B cell (primary cell): ENCODE measurements at regions of chr3 and their contacts with region 1.

Region 1: DNA sequence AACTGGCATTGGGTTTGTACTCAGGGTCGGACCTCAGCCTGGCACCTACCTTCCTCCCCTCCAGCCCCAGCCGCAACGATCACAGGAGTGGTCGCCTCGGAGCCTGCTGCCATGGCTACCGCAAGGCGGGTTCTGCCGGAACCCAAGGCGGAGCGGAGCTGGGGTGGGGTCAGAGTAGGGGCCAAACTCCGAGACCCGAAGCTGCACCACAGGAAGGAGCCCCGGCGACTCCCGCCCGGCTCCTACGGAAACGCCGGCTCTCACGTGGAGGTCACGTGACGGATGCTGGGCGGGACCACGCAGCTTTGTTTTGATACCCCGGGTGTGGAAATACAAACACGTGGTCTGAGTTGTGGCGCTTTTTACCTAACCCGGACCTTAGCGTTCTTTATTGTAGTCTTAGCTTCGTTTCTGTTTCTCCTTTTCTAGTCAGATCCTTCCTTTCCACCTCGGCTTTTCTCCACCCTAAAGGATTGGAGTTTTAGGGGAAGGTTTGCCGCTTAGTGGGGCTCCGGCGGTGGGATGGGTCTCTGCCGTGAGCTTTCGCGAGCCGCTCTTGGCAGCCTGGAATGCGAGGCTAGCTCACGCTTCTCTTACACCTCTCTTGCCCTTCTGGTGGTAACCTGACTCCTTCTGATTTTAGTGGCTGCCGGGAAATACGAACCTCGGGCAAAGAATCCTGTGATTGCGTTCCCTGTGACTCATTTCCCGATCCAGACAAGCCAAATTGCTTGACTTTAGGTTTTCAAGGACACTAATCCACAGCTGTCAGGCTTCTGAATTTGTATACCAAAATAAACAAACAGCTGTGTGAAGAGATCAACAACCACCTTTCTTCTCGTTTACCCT is at the start of gene HSPBAP1:
- DNase-seq: peak; percentile 96
- ATAC-seq: peak; percentile 57
- H3K4me3 ChIP-seq: peak within 1 kb of the TSS; percentile 58 to 96 (median 83)
- H3K4me3 Mint-ChIP-seq: peak within 1 kb of the TSS; percentile 86
- H3K27ac ChIP-seq: peak within 1 kb of the TSS; percentile 98 to 99
- H3K27ac Mint-ChIP-seq: no peak within 1 kb of the TSS
- H3K4me1 ChIP-seq: peaks cover 23 to 26% of the 10 kb centered on the region in 2 donors
- H3K4me1 Mint-ChIP-seq: peaks cover 27% of the 10 kb centered on the region
- H3K27me3 ChIP-seq: no peaks in the 10 kb centered on the region
- H3K27me3 Mint-ChIP-seq: no peaks in the 10 kb centered on the region
- CTCF ChIP-seq: no peak
- total RNA-seq, gene HSPBAP1: 49.2 and 49.6 TPM in 2 replicates

Region 2: DNA sequence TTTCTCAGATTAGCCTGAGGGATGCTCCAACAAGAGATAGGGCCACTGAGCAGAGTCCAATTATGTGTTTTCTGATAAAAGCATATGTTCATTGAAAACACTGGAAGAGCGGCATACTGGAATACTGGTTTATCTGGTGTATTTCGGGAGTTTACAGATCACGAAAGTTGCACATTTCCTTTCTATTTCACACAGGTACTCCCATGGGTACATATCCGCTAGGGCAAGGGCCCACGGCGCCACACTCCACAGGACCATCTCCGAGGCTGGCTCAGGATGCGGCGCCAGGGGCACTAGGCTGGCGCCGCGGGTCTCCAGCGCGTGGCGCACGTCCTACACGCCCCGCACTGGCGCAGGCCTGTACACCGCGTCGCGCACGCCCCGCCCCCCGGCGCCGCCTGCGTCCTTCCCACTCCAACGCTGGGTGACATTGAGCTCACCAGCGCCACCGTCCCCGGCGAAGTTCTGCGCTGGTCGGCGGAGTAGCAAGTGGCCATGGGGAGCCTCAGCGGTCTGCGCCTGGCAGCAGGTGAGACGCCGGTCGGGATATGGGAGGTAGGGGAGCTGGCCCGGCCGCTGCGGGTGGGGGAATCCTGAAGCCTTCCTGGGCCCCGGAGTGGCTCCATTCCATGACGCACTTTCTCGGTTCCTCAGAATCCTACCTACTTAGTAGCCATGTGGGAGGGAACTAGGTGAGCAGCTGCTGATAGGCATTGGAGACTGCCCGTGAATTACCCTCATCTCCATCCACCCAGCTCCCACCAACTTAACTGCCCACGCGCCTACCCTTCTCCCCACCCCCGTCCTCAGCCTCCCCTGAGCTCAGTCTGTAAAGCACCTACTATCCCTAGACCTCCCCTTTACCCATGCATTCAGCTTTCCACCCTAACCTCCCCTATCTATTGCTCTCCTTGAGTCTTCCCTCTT is 409.8 kb before region 1 on chr3 and contains the start of gene FAM162A:
- CTCF ChIA-PET with region 1: no interaction called
- POLR2A ChIA-PET with region 1: interaction called, 8 read pairs
- intact Hi-C with region 1: loop called (anchors 1 kb)
- DNase-seq: peak; percentile 96
- ATAC-seq: peak; percentile 96
- H3K4me3 ChIP-seq: peak within 1 kb of the TSS; percentile 75 to 95 (median 86)
- H3K4me3 Mint-ChIP-seq: peak within 1 kb of the TSS; percentile 93
- H3K27ac ChIP-seq: peak within 1 kb of the TSS; percentile 82 to 83
- H3K27ac Mint-ChIP-seq: peak within 1 kb of the TSS; percentile 94
- H3K4me1 ChIP-seq: peaks cover 11 to 15% of the 10 kb centered on the region in 2 donors
- H3K4me1 Mint-ChIP-seq: peaks cover 37% of the 10 kb centered on the region
- H3K27me3 ChIP-seq: no peaks in the 10 kb centered on the region
- H3K27me3 Mint-ChIP-seq: no peaks in the 10 kb centered on the region
- CTCF ChIP-seq: peak; percentile 68
- total RNA-seq, gene FAM162A: 13.9 and 17.5 TPM in 2 replicates

Region 3: GRCh38 chr3:122427857-122428471 is 365.8 kb before region 1 on chr3:
- CTCF ChIA-PET with region 1: no interaction called
- POLR2A ChIA-PET with region 1: interaction called, 10 read pairs
- intact Hi-C with region 1: no loop called
- DNase-seq: no peak
- ATAC-seq: no peak
- H3K4me3 ChIP-seq: no peak overlapping the region
- H3K4me3 Mint-ChIP-seq: no peak overlapping the region
- H3K27ac ChIP-seq: peak overlapping the region in 1 of 2 donors; percentile 37
- H3K27ac Mint-ChIP-seq: peak overlapping the region; percentile 5
- H3K4me1 ChIP-seq: no peaks in the 10 kb centered on the region
- H3K4me1 Mint-ChIP-seq: no peaks in the 10 kb centered on the region
- H3K27me3 ChIP-seq: no peaks in the 10 kb centered on the region
- H3K27me3 Mint-ChIP-seq: no peaks in the 10 kb centered on the region
- CTCF ChIP-seq: no peak

Region 4: DNA sequence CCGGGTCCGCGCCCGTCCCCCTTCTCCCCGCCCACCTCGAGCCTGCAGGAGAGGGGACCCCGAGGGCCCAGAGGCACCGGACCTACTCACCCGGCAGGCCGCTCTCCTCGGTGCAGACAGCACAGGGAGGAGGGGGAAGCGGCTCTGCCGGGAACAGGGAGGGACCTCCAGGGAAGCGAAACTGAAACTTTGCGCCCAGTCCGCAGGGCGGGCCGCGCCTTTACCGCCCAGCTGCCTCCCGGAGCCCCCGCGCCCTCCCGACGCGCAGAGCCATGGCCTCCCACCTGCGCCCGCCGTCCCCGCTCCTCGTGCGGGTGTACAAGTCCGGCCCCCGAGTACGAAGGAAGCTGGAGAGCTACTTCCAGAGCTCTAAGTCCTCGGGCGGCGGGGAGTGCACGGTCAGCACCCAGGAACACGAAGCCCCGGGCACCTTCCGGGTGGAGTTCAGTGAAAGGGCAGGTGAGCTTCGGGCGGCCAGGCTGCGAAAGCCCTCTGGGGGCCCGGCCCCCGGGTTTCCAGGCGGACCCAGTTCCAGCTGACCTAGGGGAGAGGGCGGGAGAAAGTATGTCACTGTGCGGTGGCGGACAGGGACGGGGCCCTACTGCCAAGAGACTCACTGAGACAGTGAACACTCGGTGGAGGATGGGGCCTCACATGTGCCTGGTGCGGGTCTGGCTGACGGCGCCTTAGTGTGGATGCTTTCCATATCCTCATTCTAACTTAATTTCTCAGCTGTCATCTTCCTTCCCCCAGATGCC is 229.5 kb before region 1 on chr3 and contains the starts of genes DTX3L and PARP9:
- CTCF ChIA-PET with region 1: interaction called, 6 read pairs
- POLR2A ChIA-PET with region 1: interaction called, 3 read pairs
- intact Hi-C with region 1: loop called (anchors 2 kb)
- DNase-seq: peak; percentile 84
- ATAC-seq: peak; percentile 84
- H3K4me3 ChIP-seq: peak within 1 kb of the TSS; percentile 63 to 95 (median 89)
- H3K4me3 Mint-ChIP-seq: peak within 1 kb of the TSS; percentile 92
- H3K27ac ChIP-seq: peak within 1 kb of the TSS; percentile 91 to 92
- H3K27ac Mint-ChIP-seq: peak within 1 kb of the TSS; percentile 95
- H3K4me1 ChIP-seq: peaks cover 59 to 69% of the 10 kb centered on the region in 2 donors
- H3K4me1 Mint-ChIP-seq: peaks cover 77% of the 10 kb centered on the region
- H3K27me3 ChIP-seq: no peaks in the 10 kb centered on the region
- H3K27me3 Mint-ChIP-seq: no peaks in the 10 kb centered on the region
- CTCF ChIP-seq: no peak
- total RNA-seq, gene DTX3L: 41.1 and 44.0 TPM in 2 replicates
- total RNA-seq, gene PARP9: 29.8 and 31.2 TPM in 2 replicates

Region 5: GRCh38 chr3:122697952-122698620 is 95.7 kb before region 1 on chr3:
- CTCF ChIA-PET with region 1: interaction called, 6 read pairs
- POLR2A ChIA-PET with region 1: interaction called, 6 read pairs
- intact Hi-C with region 1: loop called (anchors 1 kb)
- DNase-seq: peak; percentile 89
- ATAC-seq: peak; percentile 96
- H3K4me3 ChIP-seq: peak overlapping the region in 1 of 5 experiments; percentile 48
- H3K4me3 Mint-ChIP-seq: peak overlapping the region; percentile 59
- H3K27ac ChIP-seq: peak overlapping the region; percentile 84 to 95
- H3K27ac Mint-ChIP-seq: peak overlapping the region; percentile 88
- H3K4me1 ChIP-seq: peaks cover 78 to 83% of the 10 kb centered on the region in 2 donors
- H3K4me1 Mint-ChIP-seq: peaks cover 85% of the 10 kb centered on the region
- H3K27me3 ChIP-seq: no peaks in the 10 kb centered on the region
- H3K27me3 Mint-ChIP-seq: no peaks in the 10 kb centered on the region
- CTCF ChIP-seq: no peak

Region 6: GRCh38 chr3:123584988-123585937 is 791.5 kb after region 1 on chr3 and contains the start of gene HACD2:
- CTCF ChIA-PET with region 1: no interaction called
- POLR2A ChIA-PET with region 1: no interaction called
- intact Hi-C with region 1: loop called (anchors 10 kb)
- DNase-seq: peak; percentile 96
- ATAC-seq: peak; percentile 94
- H3K4me3 ChIP-seq: peak within 1 kb of the TSS; percentile 78 to 99 (median 86)
- H3K4me3 Mint-ChIP-seq: no peak within 1 kb of the TSS
- H3K27ac ChIP-seq: peak within 1 kb of the TSS; percentile 79 to 87
- H3K27ac Mint-ChIP-seq: peak within 1 kb of the TSS; percentile 85
- H3K4me1 ChIP-seq: peaks cover 23 to 25% of the 10 kb centered on the region in 2 donors
- H3K4me1 Mint-ChIP-seq: peaks cover 25% of the 10 kb centered on the region
- H3K27me3 ChIP-seq: no peaks in the 10 kb centered on the region
- H3K27me3 Mint-ChIP-seq: no peaks in the 10 kb centered on the region
- CTCF ChIP-seq: no peak
- total RNA-seq, gene HACD2: 30.7 and 31.1 TPM in 2 replicates